ENCODE measurements at regions of chr20 and their contacts with region 1.

Region 1: DNA sequence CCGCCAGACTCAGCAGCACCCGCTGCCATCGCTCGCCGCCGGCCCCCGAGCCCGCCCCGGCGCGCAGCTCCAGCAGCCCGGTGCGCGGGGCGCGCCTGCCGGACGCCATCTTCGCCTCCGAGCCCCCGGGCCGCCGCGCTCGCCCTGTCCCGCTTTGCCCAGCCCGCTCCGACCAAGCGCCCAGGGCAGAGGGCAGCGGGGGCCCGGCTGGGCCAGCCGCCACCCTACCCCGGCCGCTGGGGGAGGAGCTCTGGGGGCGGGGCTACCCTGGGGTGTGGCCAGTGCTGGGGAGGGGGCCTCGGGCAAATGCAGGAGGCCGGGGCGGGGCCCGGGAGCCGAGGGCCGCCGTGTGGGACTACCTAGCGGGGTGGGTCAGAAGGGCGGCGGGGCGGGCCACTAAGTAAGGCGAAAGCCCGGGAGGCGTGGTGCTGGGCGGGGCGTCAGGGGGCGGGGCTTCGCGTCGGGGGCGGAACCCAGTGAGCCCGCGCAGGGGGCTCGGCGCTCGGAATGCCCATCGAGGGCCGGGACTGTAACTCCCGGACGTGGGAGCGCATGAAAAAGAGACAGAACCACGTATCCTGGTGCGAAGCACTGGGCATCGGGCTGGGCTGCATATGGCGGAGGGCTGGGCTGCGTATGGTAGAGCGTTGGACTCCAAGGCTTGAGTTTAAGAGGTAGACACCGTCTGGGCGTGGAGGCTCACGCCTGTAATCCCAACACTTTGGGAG is at the start of gene SNTA1:
- DNase-seq: peak; percentile 96
- total RNA-seq, gene SNTA1: 40.1 to 44.7 TPM

Region 2: DNA sequence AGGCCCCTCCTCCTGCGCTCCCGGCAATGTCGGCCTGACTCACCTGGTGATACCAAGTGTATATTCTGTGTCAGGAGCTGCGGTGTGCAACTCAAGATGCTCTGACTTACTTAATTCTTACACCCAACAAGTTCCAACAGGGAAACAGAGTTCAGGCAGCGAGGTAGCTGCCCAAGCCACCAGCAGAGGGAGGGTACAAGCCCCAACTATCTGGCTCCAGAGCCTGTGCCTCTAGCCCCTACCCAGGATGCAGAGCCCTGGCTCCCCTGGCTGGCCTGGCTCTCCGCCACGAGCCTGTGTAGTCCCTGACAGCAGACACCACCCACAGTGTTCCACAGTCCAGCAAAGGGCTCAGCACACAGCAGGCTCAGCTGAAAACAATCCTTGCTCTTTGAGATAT is 804.8 kb before region 1 on chr20:
- intact Hi-C with region 1: no loop called
- DNase-seq: no peak

Region 3: DNA sequence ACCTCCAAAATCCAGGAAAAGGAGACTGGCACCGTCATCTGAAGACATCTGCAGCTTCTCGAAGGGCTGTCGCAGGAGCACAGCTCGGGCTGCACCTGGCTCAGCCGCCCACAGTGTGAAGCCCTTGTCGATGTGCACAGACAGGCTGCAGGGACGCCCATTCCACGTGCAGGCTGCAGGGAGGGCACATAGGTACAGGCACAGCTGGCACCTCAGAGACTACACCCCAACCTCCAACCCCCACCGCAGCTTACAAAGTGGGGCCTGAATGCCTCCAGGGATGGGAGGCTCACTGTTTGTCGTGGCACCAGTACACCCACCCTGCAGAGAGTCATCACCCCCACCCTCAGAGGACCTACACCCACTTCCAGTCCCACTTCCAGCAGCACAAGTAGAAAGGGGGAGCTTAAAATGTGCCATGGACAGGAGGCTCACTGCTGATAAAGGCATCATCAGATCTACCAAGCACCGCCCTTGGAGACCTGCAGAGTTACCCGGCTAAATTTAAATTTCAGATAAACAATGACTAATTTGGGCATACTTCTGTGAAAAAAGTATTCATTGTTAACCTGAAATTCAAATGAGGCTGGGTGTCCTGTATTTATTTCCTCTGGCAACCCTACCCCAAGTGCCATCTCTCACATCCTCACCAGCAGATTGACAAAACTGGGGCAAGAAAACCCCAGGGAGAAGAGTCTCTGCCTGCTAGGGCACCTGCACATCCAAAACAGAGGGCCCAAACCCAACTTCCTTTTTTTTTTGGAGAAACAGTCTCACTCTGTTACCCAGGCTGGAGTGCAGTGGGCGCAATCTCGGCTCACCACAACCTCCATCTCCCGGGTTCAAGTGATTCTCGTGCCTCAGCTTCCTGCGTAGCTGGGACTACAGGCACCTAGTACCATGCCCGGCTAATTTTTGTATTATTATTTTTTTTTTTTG is 34.7 kb before region 1 on chr20:
- intact Hi-C with region 1: loop called in 1 of 2 experiments (anchors 5 kb)
- DNase-seq: no peak